Endothelial cell of umbilical vein (primary cell): ENCODE measurements at regions of chr3 and their contacts with region 1.

Region 1: GRCh38 chr3:39383045-39383880 is at the start of gene SLC25A38:
- DNase-seq: peak; percentile 86
- H3K4me3 ChIP-seq: peak within 1 kb of the TSS; percentile 58 to 79 (median 70)
- H3K27ac ChIP-seq: peak within 1 kb of the TSS; percentile 54
- H3K4me1 ChIP-seq: peaks cover 8% of the 10 kb centered on the region
- H3K27me3 ChIP-seq: no peaks in the 10 kb centered on the region
- CTCF ChIP-seq: peak in 1 of 2 donors; percentile 24
- POLR2A ChIP-seq: peak; percentile 71
- total RNA-seq, gene SLC25A38: 16.0 and 20.0 TPM in 2 replicates

Region 2: GRCh38 chr3:39107388-39108199 is 275.7 kb before region 1 on chr3 and contains the starts of genes GORASP1 and TTC21A:
- CTCF ChIA-PET with region 1: interaction called, 4 read pairs
- POLR2A ChIA-PET with region 1: no interaction called
- dilution Hi-C with region 1: no loop called
- intact Hi-C with region 1: loop called (anchors 2 kb)
- DNase-seq: peak; percentile 86
- H3K4me3 ChIP-seq: peak within 1 kb of the TSS; percentile 69 to 84 (median 78)
- H3K27ac ChIP-seq: peak within 1 kb of the TSS; percentile 75
- H3K4me1 ChIP-seq: peaks cover 18% of the 10 kb centered on the region
- H3K27me3 ChIP-seq: no peaks in the 10 kb centered on the region
- CTCF ChIP-seq: no peak
- POLR2A ChIP-seq: peak; percentile 67
- total RNA-seq, gene GORASP1: 68.0 and 74.7 TPM in 2 replicates
- total RNA-seq, gene TTC21A: 6.3 and 7.8 TPM in 2 replicates

Region 3: DNA sequence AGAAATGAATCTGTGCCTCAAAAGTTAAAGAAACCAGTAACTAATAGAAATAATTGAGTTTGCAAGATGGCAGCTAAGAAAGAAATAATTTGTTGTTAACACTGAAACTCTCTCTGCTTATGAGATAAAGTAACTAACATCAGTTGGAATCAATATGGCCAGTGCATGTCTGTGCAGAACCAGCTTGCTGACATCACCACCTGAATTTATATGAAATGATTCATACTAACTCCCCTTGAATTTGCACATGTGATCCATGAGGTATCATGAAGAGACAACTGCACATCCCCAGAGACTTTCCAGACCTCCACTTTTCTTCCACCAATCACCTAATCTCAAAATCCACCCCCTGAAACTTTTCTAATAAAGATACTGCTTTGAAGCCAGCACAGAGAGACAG is 10.4 kb before region 1 on chr3:
- CTCF ChIA-PET with region 1: no interaction called
- POLR2A ChIA-PET with region 1: no interaction called
- dilution Hi-C with region 1: no loop called
- intact Hi-C with region 1: no loop called
- DNase-seq: no peak
- H3K4me3 ChIP-seq: no peak overlapping the region
- H3K27ac ChIP-seq: no peak overlapping the region
- H3K4me1 ChIP-seq: peaks cover 11% of the 10 kb centered on the region
- H3K27me3 ChIP-seq: peaks cover 0 to 2% of the 10 kb centered on the region in 2 experiments
- CTCF ChIP-seq: no peak
- POLR2A ChIP-seq: no peak

Region 4: DNA sequence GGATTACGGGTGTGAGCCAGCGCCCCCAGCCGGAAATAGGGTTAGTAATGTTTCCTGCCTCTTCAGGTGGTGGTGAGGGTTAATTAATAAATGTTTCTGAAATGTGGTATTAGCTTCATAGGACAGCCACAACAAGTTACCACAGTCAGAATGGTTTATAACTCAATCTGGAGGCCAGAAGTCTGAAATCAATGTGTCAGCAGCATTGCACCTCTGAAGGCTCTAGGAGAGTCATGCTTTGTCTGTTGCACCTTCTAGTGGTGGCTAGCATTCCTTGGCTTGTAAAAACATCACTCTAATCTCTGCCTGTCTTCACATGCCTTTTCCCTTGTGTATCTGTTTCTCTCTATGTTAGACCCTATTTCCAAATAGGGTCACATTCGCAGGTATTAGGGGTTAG is 15.4 kb after region 1 on chr3:
- CTCF ChIA-PET with region 1: interaction called, 4 read pairs
- POLR2A ChIA-PET with region 1: no interaction called
- dilution Hi-C with region 1: no loop called
- intact Hi-C with region 1: loop called (anchors 1 kb)
- DNase-seq: no peak
- H3K4me3 ChIP-seq: no peak overlapping the region
- H3K27ac ChIP-seq: no peak overlapping the region
- H3K4me1 ChIP-seq: no peaks in the 10 kb centered on the region
- H3K27me3 ChIP-seq: no peaks in the 10 kb centered on the region
- CTCF ChIP-seq: no peak
- POLR2A ChIP-seq: no peak

Region 5: GRCh38 chr3:39406368-39407258 is 23.4 kb after region 1 on chr3 and contains the start of gene RPSA:
- CTCF ChIA-PET with region 1: interaction called, 6 read pairs
- POLR2A ChIA-PET with region 1: interaction called, 3 read pairs
- dilution Hi-C with region 1: no loop called
- intact Hi-C with region 1: loop called (anchors 1 kb)
- DNase-seq: peak; percentile 96
- H3K4me3 ChIP-seq: peak within 1 kb of the TSS; percentile 52 to 96 (median 65)
- H3K27ac ChIP-seq: peak within 1 kb of the TSS; percentile 59
- H3K4me1 ChIP-seq: peaks cover 19% of the 10 kb centered on the region
- H3K27me3 ChIP-seq: no peaks in the 10 kb centered on the region
- CTCF ChIP-seq: peak; percentile 14 to 38
- POLR2A ChIP-seq: peak; percentile 99
- total RNA-seq, gene RPSA: 1,060 and 1,357 TPM in 2 replicates